ENCODE measurements at regions of chr9 and their contacts with region 1.

Region 1: GRCh38 chr9:121169094-121169601 is 32.5 kb downstream of the RAB14 start:
- DNase-seq: no peak
- CTCF ChIP-seq: no peak

Region 2: DNA sequence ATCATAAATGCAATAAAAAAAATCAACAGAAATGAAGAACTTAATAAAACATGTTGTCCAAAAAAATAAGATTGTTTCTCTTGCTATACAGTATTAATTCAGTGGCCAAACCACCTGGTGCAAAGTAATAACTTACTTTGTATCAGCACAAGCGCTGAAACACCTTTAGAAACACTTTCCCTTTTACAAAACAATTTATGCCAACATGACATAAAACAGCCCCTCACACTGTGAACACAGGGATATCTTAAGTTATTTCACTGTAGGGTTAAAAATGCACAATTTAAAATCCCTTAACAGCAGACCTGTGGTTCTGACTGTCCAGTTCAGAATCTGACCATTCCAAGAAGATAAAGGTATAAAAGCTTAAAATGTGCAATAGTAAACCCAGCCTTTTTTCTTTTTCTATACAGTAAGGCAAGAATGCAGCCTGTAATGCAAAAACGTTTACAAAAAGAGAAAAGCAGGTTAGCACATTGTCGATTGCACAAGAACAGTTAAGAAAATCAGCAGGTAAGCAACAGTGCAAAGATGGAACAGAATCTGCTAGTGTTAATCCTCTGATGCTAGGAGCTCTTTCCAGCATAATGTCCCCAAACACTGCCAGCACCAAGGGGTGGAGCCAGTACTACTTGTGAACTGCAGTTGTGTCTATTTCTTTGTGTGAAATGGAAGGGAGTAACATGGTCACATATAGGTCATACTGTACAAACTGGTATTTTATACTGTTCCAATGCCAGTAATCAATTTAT is 11.0 kb after region 1 on chr9:
- CTCF ChIA-PET with region 1: interaction called, 37 read pairs
- POLR2A ChIA-PET with region 1: no interaction called
- DNase-seq: no peak
- CTCF ChIP-seq: no peak

Region 3: GRCh38 chr9:121185178-121185745 is 16.1 kb after region 1 on chr9:
- CTCF ChIA-PET with region 1: interaction called, 37 read pairs
- POLR2A ChIA-PET with region 1: interaction called, 3 read pairs
- DNase-seq: no peak
- CTCF ChIP-seq: no peak

Measured in GM10248 (cell line).